AG04450 (cell line): ENCODE measurements at regions of chr11 and their contacts with region 1.

Region 1: GRCh38 chr11:45859661-45860140 is 12.4 kb downstream of the CRY2 start:
- DNase-seq: peak; percentile 99
- H3K4me3 ChIP-seq: 0 out of 2 replicates have a peak overlapping the region, but pooled peaks have one; percentile 1
- H3K27ac ChIP-seq: peak overlapping the region; percentile 95
- H3K27me3 ChIP-seq: no peaks in the 10 kb centered on the region
- CTCF ChIP-seq: no peak

Region 2: DNA sequence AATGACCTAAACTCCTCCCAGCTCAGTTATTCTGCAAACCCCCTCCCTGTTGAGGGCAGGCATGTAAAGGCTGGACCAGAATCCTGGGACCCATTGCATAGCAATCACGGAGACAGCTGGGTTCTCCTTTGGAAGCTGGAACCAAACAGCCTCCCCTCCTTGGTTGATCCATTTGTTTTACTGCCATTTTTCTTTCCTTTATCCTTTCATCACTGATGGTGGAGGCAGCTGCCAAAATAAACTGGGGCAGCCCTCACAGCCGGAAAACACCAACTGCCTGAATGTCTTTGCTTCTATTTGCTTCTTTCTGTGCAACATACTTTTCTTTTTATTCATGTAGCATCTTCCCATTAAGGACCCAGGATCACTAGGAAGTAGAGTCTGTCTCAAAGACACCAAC is 423.6 kb before region 1 on chr11:
- CTCF ChIA-PET with region 1: no interaction called
- POLR2A ChIA-PET with region 1: no interaction called
- DNase-seq: no peak
- H3K4me3 ChIP-seq: no peak overlapping the region
- H3K27ac ChIP-seq: no peak overlapping the region
- H3K27me3 ChIP-seq: peaks cover 6% of the 10 kb centered on the region
- CTCF ChIP-seq: no peak

Region 3: GRCh38 chr11:45798793-45799441 is 60.8 kb before region 1 on chr11:
- CTCF ChIA-PET with region 1: no interaction called
- POLR2A ChIA-PET with region 1: interaction called, 10 read pairs
- DNase-seq: no peak
- H3K4me3 ChIP-seq: no peak overlapping the region
- H3K27ac ChIP-seq: no peak overlapping the region
- H3K27me3 ChIP-seq: peaks cover 14% of the 10 kb centered on the region
- CTCF ChIP-seq: no peak

Region 4: GRCh38 chr11:45809456-45810395 is 50.0 kb before region 1 on chr11:
- CTCF ChIA-PET with region 1: no interaction called
- POLR2A ChIA-PET with region 1: no interaction called
- DNase-seq: no peak
- H3K4me3 ChIP-seq: no peak overlapping the region
- H3K27ac ChIP-seq: no peak overlapping the region
- H3K27me3 ChIP-seq: no peaks in the 10 kb centered on the region
- CTCF ChIP-seq: no peak

Region 5: DNA sequence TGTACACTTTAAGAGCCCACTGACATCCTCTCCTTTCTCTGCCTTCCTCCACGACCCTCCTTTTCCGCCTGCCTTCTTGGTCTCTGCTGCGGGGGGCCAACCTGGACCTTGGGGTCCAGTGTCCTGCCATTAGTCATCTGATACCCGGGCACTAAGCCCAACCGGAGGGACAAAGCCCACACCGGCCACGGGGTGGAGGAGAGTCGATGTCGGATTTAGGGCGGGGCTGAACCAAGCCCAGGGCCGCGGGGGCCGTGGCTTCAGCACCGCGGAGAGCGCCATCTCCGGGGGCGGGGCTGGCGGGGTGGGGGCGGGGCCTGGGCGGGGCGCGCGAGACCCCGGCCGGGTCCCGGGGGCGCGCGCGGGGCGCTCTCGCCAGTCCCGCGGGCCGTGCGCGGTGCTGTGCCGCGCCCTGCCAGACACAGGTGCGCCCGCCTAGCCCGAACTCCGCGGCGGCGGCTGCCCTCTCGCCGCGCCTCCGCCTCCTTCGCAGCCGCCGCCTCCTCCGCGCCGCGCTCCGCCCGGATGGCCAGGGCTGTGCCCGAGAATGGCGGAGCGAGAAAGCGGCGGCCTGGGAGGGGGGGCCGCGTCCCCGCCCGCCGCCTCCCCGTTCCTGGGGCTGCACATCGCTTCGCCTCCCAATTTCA is 25.7 kb after region 1 on chr11 and contains the start of gene MAPK8IP1:
- CTCF ChIA-PET with region 1: no interaction called
- POLR2A ChIA-PET with region 1: no interaction called
- DNase-seq: no peak
- H3K4me3 ChIP-seq: peak within 1 kb of the TSS; percentile 47
- H3K27ac ChIP-seq: no peak within 1 kb of the TSS
- H3K27me3 ChIP-seq: peaks cover 17% of the 10 kb centered on the region
- CTCF ChIP-seq: no peak
- polyA plus RNA-seq, gene MAPK8IP1: 5.6 and 7.6 TPM in 2 replicates

Region 6: GRCh38 chr11:46200537-46201281 is 341.0 kb after region 1 on chr11:
- CTCF ChIA-PET with region 1: no interaction called
- POLR2A ChIA-PET with region 1: no interaction called
- DNase-seq: no peak
- H3K4me3 ChIP-seq: no peak overlapping the region
- H3K27ac ChIP-seq: no peak overlapping the region
- H3K27me3 ChIP-seq: peaks cover 35% of the 10 kb centered on the region
- CTCF ChIP-seq: no peak